Naive thymus-derived CD4-positive, alpha-beta T cell (primary cell): ENCODE measurements at regions of chr3 and their contacts with region 1.

Region 1: GRCh38 chr3:140941434-140942220 is at the start of gene SLC25A36:
- DNase-seq: peak; percentile 83 to 96 (median 94)
- ATAC-seq: peak; percentile 99
- H3K4me3 ChIP-seq: peak within 1 kb of the TSS; percentile 69
- H3K4me3 Mint-ChIP-seq: peak within 1 kb of the TSS; percentile 90 to 100 (median 96)
- H3K27ac ChIP-seq: peak within 1 kb of the TSS; percentile 89
- H3K27ac Mint-ChIP-seq: peak within 1 kb of the TSS; percentile 94 to 100 (median 99)
- H3K4me1 ChIP-seq: peaks cover 9 to 14% of the 10 kb centered on the region in 2 donors
- H3K4me1 Mint-ChIP-seq: peaks cover 31 to 52% (median 47%) of the 10 kb centered on the region in 7 donors
- H3K27me3 ChIP-seq: no peaks in the 10 kb centered on the region
- H3K27me3 Mint-ChIP-seq: peaks cover 0 to 30% (median 0%) of the 10 kb centered on the region in 5 donors
- total RNA-seq, gene SLC25A36: 43.4 to 121 (median 66.9) TPM

Region 2: GRCh38 chr3:139117136-139117675 is 1824.4 kb before region 1 on chr3:
- CTCF ChIA-PET with region 1: no interaction called
- POLR2A ChIA-PET with region 1: no interaction called
- intact Hi-C with region 1: loop called in 1 of 2 experiments (anchors 5 kb)
- DNase-seq: peak in 2 of 9 donors; percentile 20 to 24
- ATAC-seq: peak; percentile 20
- H3K4me3 ChIP-seq: no peak overlapping the region
- H3K4me3 Mint-ChIP-seq: no peak overlapping the region
- H3K27ac ChIP-seq: no peak overlapping the region
- H3K27ac Mint-ChIP-seq: no peak overlapping the region
- H3K4me1 ChIP-seq: no peaks in the 10 kb centered on the region
- H3K4me1 Mint-ChIP-seq: peaks cover 0 to 1% (median 0%) of the 10 kb centered on the region in 7 donors
- H3K27me3 ChIP-seq: no peaks in the 10 kb centered on the region
- H3K27me3 Mint-ChIP-seq: peaks cover 0 to 19% (median 11%) of the 10 kb centered on the region in 5 donors

Region 3: GRCh38 chr3:139677388-139678155 is 1264.1 kb before region 1 on chr3 and contains the start of gene NMNAT3:
- CTCF ChIA-PET with region 1: no interaction called
- POLR2A ChIA-PET with region 1: no interaction called
- intact Hi-C with region 1: loop called in 1 of 2 experiments (anchors 1 kb)
- DNase-seq: peak; percentile 65 to 84 (median 79)
- ATAC-seq: peak; percentile 99
- H3K4me3 ChIP-seq: peak within 1 kb of the TSS; percentile 73
- H3K4me3 Mint-ChIP-seq: peak within 1 kb of the TSS; percentile 76 to 88 (median 86)
- H3K27ac ChIP-seq: peak within 1 kb of the TSS; percentile 78
- H3K27ac Mint-ChIP-seq: peak within 1 kb of the TSS in 6 of 9 donors; percentile 31 to 80 (median 52)
- H3K4me1 ChIP-seq: peaks cover 0 to 7% of the 10 kb centered on the region in 2 donors
- H3K4me1 Mint-ChIP-seq: peaks cover 6 to 23% (median 14%) of the 10 kb centered on the region in 7 donors
- H3K27me3 ChIP-seq: no peaks in the 10 kb centered on the region
- H3K27me3 Mint-ChIP-seq: peaks cover 0 to 14% (median 0%) of the 10 kb centered on the region in 5 donors
- total RNA-seq, gene NMNAT3: 0.56 to 7.4 (median 4.5) TPM

Region 4: DNA sequence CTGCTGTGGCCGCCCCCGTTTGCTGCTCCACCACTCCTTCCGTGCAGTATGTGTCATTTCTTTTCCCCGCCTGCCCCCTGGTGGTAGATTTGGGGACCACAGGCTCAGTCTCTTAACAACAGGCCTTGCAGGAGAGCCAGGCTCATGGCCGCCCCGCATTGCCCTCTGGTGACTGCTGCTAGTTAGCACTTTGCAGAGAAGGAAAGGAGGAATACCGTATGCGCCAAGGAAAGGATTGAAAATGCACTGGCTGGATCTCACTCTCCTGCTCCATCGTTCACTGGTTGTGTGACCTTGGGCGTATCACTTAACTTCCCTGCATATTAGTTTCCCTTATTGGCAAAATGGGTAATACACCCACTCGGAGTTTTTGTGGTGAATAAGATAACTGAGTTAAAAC is 250.7 kb after region 1 on chr3:
- CTCF ChIA-PET with region 1: no interaction called
- POLR2A ChIA-PET with region 1: no interaction called
- intact Hi-C with region 1: loop called in 1 of 2 experiments (anchors 1 kb)
- DNase-seq: peak; percentile 88 to 99 (median 95)
- ATAC-seq: peak; percentile 100
- H3K4me3 ChIP-seq: no peak overlapping the region
- H3K4me3 Mint-ChIP-seq: peak overlapping the region in 3 of 10 donors; percentile 5 to 14 (median 5)
- H3K27ac ChIP-seq: no peak overlapping the region
- H3K27ac Mint-ChIP-seq: peak overlapping the region in 6 of 9 donors; percentile 4 to 75 (median 16)
- H3K4me1 ChIP-seq: no peaks in the 10 kb centered on the region
- H3K4me1 Mint-ChIP-seq: peaks cover 0 to 15% (median 13%) of the 10 kb centered on the region in 7 donors
- H3K27me3 ChIP-seq: peaks cover 0 to 5% of the 10 kb centered on the region in 2 donors
- H3K27me3 Mint-ChIP-seq: peaks cover 0 to 23% (median 6%) of the 10 kb centered on the region in 5 donors

Region 5: GRCh38 chr3:141303481-141304223 is 362.0 kb after region 1 on chr3:
- CTCF ChIA-PET with region 1: no interaction called
- POLR2A ChIA-PET with region 1: no interaction called
- intact Hi-C with region 1: loop called in 1 of 2 experiments (anchors 10 kb)
- DNase-seq: peak in 7 of 9 donors; percentile 62 to 84 (median 77)
- ATAC-seq: peak; percentile 77
- H3K4me3 ChIP-seq: no peak overlapping the region
- H3K4me3 Mint-ChIP-seq: peak overlapping the region in 1 of 10 donors; percentile 3
- H3K27ac ChIP-seq: no peak overlapping the region
- H3K27ac Mint-ChIP-seq: peak overlapping the region in 5 of 9 donors; percentile 4 to 84 (median 50)
- H3K4me1 ChIP-seq: peaks cover 20 to 57% of the 10 kb centered on the region in 2 donors
- H3K4me1 Mint-ChIP-seq: peaks cover 30 to 90% (median 80%) of the 10 kb centered on the region in 7 donors
- H3K27me3 ChIP-seq: no peaks in the 10 kb centered on the region
- H3K27me3 Mint-ChIP-seq: peaks cover 0 to 5% (median 0%) of the 10 kb centered on the region in 5 donors

Region 6: GRCh38 chr3:142578327-142579223 is 1636.9 kb after region 1 on chr3 and contains the start of gene ATR:
- CTCF ChIA-PET with region 1: no interaction called
- POLR2A ChIA-PET with region 1: no interaction called
- intact Hi-C with region 1: loop called (anchors 5 to 10 kb)
- DNase-seq: peak; percentile 89 to 96 (median 95)
- ATAC-seq: peak; percentile 96
- H3K4me3 ChIP-seq: peak within 1 kb of the TSS; percentile 97
- H3K4me3 Mint-ChIP-seq: peak within 1 kb of the TSS; percentile 93 to 99 (median 97)
- H3K27ac ChIP-seq: peak within 1 kb of the TSS; percentile 94
- H3K27ac Mint-ChIP-seq: peak within 1 kb of the TSS; percentile 96 to 99 (median 98)
- H3K4me1 ChIP-seq: peaks cover 25 to 26% of the 10 kb centered on the region in 2 donors
- H3K4me1 Mint-ChIP-seq: peaks cover 45 to 60% (median 54%) of the 10 kb centered on the region in 7 donors
- H3K27me3 ChIP-seq: no peaks in the 10 kb centered on the region
- H3K27me3 Mint-ChIP-seq: peaks cover 0 to 20% (median 0%) of the 10 kb centered on the region in 5 donors
- total RNA-seq, gene ATR: 31.3 to 48.3 (median 36.2) TPM